ENCODE measurements at regions of chr12 and their contacts with region 1.

Region 1: DNA sequence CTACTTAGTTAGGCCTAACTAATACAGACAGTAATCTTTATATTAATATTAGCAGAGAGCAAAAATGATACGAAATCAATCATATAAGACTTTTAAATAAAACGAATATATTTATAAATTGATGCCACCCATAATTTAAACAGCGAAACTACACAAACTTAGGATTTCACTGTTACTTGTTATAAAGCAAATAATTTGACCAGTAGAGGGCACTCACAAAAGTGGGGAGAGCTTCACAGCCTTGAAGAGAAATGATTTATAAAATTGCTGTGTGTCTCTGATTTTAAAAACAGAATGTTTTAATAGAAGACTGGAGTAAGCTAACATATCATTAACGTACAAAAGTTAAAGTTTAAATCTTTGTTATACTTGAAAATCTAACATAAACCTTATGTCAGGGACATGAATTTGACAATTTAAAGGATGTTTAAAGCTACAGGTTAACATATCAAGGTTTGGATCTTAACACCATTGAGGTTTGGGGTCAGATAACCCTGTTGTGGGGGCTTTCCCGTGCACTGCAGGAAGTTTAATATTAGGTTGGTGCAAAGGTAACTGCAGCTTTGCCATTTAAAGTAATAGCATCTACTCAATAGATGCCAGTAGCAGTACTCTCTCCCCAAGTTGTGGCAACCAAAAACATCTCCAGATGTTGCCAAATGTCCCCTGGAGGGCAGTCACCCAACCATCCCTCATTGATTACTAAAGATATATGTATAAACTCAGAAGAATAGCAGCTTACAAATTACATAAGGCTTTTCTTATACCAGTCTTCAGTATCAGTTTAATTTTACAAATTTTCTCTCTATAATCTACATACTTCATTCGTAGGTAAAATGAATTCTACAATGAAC is 9.3 kb downstream of the KRAS start:
- DNase-seq: no peak
- H3K4me3 Mint-ChIP-seq: no peak overlapping the region
- H3K27ac Mint-ChIP-seq: no peak overlapping the region
- H3K4me1 Mint-ChIP-seq: peaks cover 46% of the 10 kb centered on the region
- H3K27me3 Mint-ChIP-seq: no peaks in the 10 kb centered on the region

Region 2: GRCh38 chr12:25208554-25208953 is 32.8 kb before region 1 on chr12:
- CTCF ChIA-PET with region 1: interaction called, 4 read pairs
- intact Hi-C with region 1: loop called (anchors 1 kb)
- DNase-seq: no peak
- H3K4me3 Mint-ChIP-seq: no peak overlapping the region
- H3K27ac Mint-ChIP-seq: peak overlapping the region; percentile 46
- H3K4me1 Mint-ChIP-seq: peaks cover 11% of the 10 kb centered on the region
- H3K27me3 Mint-ChIP-seq: no peaks in the 10 kb centered on the region

Region 3: GRCh38 chr12:25283006-25283405 is 41.6 kb after region 1 on chr12:
- CTCF ChIA-PET with region 1: interaction called, 10 read pairs
- intact Hi-C with region 1: no loop called
- DNase-seq: no peak
- H3K4me3 Mint-ChIP-seq: no peak overlapping the region
- H3K27ac Mint-ChIP-seq: no peak overlapping the region
- H3K4me1 Mint-ChIP-seq: peaks cover 41% of the 10 kb centered on the region
- H3K27me3 Mint-ChIP-seq: no peaks in the 10 kb centered on the region

Region 4: DNA sequence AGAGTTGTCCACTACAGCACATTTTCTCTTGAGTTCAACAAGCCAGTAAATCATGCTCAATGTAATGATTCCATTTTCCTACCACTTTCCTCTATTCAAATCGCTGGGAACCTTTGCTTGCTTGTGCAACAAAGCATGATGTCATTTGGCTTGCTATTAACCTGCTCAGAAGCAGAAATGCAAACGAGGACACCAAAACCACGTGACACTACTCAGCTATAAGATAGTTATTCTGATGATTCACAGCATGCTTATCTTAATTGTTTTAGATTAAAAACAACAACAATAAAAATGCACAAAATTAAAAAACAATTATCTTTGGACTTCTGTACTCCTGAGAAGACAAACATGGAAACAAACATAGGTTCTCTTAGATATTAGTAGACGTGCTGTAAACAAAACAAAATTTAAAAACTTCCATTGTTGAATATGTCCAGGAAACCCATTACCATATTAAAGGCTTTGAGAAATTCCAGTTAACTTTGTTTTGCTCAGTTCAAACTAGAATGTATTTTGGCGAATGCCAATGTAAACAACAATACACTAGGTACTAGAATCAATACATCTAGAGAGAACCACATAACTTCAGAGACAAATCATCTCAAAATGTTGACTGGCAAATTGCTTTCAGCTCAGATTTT is 86.8 kb after region 1 on chr12:
- CTCF ChIA-PET with region 1: interaction called, 5 read pairs
- intact Hi-C with region 1: loop called (anchors 1 kb)
- DNase-seq: peak; percentile 20
- H3K4me3 Mint-ChIP-seq: no peak overlapping the region
- H3K27ac Mint-ChIP-seq: no peak overlapping the region
- H3K4me1 Mint-ChIP-seq: peaks cover 32% of the 10 kb centered on the region
- H3K27me3 Mint-ChIP-seq: no peaks in the 10 kb centered on the region

Region 5: GRCh38 chr12:25377469-25378177 is 136.2 kb after region 1 on chr12:
- CTCF ChIA-PET with region 1: interaction called, 21 read pairs
- intact Hi-C with region 1: no loop called
- DNase-seq: peak; percentile 75
- H3K4me3 Mint-ChIP-seq: peak overlapping the region; percentile 8
- H3K27ac Mint-ChIP-seq: peak overlapping the region; percentile 54
- H3K4me1 Mint-ChIP-seq: peaks cover 54% of the 10 kb centered on the region
- H3K27me3 Mint-ChIP-seq: no peaks in the 10 kb centered on the region

Region 6: DNA sequence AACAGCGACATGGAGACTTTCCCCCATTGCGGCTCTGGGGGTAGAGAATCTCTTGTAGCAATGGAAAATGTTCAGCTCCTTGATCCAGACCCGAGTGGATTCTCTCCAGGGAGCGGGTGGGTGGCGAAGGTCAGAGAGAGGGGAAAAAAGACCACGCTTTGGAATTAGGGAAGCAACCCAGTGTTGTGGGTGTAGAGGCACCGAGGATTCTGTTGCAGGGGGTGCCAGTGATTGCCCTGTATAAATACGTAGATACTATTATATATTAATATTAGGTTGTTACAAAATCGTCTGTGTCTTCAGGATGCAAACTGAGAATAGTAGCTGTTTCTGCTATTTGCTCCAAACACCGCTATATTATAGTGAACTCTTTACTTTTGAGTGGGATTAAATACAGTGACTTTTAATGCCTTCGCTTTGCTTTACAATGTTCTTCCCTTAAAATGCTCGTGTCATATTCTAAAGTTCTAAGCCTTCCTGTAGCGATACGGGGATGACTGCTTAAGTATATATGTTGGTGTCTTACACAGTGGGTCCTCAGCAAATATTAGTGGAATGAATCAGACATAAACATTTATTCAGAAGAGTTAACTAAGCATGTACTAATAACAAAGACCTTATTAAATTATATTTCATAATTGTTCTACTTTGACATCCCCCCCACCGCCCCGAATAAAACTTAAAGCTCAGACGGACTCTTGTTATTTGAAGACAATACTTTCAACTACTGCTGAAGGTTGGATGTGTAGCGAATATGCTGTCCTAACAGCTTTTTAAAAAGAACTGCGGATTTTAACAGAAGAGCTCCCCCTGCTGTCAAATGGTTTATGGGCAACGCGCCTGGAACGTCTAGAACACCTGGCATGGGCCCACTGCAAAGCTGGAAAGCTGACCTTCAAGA is 145.7 kb after region 1 on chr12:
- CTCF ChIA-PET with region 1: interaction called, 3 read pairs
- intact Hi-C with region 1: loop called (anchors 1 kb)
- DNase-seq: peak; percentile 87
- H3K4me3 Mint-ChIP-seq: peak overlapping the region; percentile 99
- H3K27ac Mint-ChIP-seq: peak overlapping the region; percentile 100
- H3K4me1 Mint-ChIP-seq: peaks cover 56% of the 10 kb centered on the region
- H3K27me3 Mint-ChIP-seq: no peaks in the 10 kb centered on the region